HEK293 (cell line): ENCODE measurements at regions of chr11 and their contacts with region 1.

Region 1: GRCh38 chr11:95835768-95836488 is 45.6 kb downstream of the CEP57 start:
- H3K4me3 ChIP-seq: no peak overlapping the region
- H3K27ac ChIP-seq: no peak overlapping the region
- H3K4me1 ChIP-seq: no peaks in the 10 kb centered on the region
- CTCF ChIP-seq: no peak

Region 2: DNA sequence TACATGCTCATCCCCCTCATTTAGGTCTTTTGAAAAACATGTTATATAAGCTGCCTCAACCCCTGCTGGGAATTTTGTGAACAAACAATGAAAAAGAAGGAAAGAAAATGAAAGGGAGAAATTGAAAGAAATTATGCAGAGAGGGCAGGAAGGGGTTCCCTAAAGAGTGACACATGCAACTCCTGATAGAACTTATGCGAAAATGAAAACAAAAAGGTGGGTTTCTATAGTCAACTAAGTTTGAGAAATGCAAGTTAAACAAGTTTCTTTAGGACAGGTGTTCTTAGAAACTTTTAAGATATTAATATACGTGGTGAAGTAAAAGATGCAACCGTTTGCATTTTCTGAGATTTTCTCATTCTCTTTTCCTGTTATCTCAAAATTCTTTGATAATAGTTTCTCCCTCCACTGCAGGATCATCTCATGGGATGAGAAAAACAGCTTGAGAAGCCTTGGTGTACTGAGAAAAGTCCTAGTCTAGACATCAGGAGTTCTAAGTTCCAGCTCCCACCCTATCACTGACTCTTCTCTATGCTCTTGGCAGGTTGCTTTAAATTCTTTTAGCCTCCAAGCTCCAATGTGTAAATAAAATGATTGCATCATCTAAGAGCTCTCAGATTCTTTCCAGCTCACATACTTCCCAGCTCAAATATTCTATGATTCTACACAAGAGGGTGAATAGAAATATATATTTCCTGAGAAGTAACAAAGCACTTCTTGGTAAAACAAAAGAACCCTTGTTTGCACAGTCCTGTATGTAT is 155.6 kb before region 1 on chr11:
- CTCF ChIA-PET with region 1: no interaction called
- POLR2A ChIA-PET with region 1: no interaction called
- H3K4me3 ChIP-seq: no peak overlapping the region
- H3K27ac ChIP-seq: no peak overlapping the region
- H3K4me1 ChIP-seq: no peaks in the 10 kb centered on the region
- CTCF ChIP-seq: no peak

Region 3: GRCh38 chr11:95715777-95716241 is 120.1 kb before region 1 on chr11:
- CTCF ChIA-PET with region 1: no interaction called
- POLR2A ChIA-PET with region 1: no interaction called
- H3K4me3 ChIP-seq: no peak overlapping the region
- H3K27ac ChIP-seq: no peak overlapping the region
- H3K4me1 ChIP-seq: no peaks in the 10 kb centered on the region
- CTCF ChIP-seq: no peak

Region 4: GRCh38 chr11:95821640-95822039 is 14.3 kb before region 1 on chr11:
- CTCF ChIA-PET with region 1: interaction called, 14 read pairs
- POLR2A ChIA-PET with region 1: interaction called, 5 read pairs
- H3K4me3 ChIP-seq: no peak overlapping the region
- H3K27ac ChIP-seq: no peak overlapping the region
- H3K4me1 ChIP-seq: no peaks in the 10 kb centered on the region
- CTCF ChIP-seq: no peak

Region 5: GRCh38 chr11:95849087-95849825 is 13.3 kb after region 1 on chr11:
- CTCF ChIA-PET with region 1: interaction called, 18 read pairs
- POLR2A ChIA-PET with region 1: no interaction called
- H3K4me3 ChIP-seq: no peak overlapping the region
- H3K27ac ChIP-seq: no peak overlapping the region
- H3K4me1 ChIP-seq: no peaks in the 10 kb centered on the region
- CTCF ChIP-seq: no peak

Region 6: DNA sequence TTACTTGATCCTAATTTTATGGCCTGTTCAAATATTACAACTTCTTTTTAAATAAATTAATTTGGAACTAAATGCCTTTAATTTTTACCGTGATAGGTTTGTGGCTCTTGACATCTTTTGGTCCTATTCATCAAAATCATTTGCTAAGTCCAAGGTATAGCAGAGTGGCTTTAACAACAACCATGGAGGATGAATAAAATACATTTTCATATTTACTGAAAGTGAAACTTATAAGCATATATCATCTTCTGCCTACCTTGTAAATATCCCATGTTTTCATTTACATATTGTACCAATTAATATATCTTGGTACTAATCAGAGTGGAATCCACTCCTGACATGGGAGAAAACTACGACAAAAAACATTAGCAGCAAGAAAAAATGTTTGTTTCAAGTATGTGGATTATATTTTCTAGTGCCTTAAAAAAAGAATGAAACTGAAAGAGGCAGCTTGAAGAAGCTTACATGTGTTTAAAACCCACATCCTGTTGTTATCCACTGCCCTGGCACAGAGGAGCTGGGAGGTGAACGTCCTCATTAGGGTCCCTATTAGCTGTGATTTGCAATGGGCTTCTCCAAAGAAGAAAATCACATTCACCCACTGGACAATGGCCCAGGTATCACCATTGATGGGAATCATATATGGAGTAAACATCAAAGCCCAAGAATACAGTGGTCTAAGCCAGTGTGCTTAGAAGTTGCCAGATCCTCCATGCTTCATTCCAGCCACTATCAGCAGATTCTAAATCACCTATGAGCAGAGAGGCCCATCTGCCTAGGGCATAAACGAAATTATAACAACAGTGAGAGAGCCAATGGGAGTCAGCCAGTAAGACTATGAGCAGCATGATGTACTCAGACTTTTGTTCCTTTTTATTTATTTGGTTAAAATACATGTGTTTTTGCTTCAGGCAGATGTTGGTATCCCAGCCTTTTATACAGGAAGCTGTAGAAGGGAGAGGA is 422.3 kb after region 1 on chr11:
- CTCF ChIA-PET with region 1: no interaction called
- POLR2A ChIA-PET with region 1: no interaction called
- H3K4me3 ChIP-seq: no peak overlapping the region
- H3K27ac ChIP-seq: no peak overlapping the region
- H3K4me1 ChIP-seq: no peaks in the 10 kb centered on the region
- CTCF ChIP-seq: no peak